PC-3 (cell line): ENCODE measurements at regions of chr4 and their contacts with region 1.

Region 1: GRCh38 chr4:26319467-26319948 is 1.3 kb upstream of the RBPJ start:
- DNase-seq: peak; percentile 98
- ATAC-seq: peak; percentile 71
- H3K4me3 ChIP-seq: peak overlapping the region; percentile 78
- H3K27ac ChIP-seq: peak overlapping the region; percentile 92
- H3K4me1 ChIP-seq: peaks cover 12% of the 10 kb centered on the region
- H3K27me3 ChIP-seq: no peaks in the 10 kb centered on the region
- CTCF ChIP-seq: no peak

Region 2: DNA sequence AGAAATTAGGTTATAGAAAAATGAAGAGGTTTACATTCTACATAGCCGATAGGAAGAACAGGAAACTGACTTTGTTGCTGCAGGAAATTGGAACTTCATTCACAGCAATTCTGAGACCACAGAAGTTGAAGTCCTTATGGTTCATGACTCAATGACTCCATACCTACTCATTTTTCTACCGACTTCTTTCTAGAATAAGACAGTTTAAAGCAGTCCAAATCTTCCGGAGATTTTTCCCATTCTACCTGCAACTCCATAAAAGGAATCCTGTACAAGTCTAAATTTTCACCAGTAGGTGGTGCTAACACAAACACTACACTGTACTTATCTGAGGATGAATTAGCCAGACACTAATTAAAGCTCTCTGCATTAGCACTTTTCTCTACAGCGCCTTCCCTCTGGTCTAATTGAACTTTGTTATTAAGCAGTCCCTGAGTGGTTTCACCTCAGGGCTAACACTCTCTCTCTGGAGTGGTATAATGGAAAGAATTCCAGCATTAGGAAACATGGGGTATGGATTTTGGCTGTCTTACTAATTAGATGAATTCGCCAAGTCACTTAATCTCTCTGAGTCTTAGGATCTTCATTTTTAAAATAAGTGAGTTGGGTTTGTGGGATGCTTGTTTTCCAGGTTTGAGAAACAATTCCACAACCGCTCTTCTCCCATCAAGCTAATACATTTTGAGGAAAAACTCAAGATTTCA is 237.6 kb before region 1 on chr4:
- CTCF ChIA-PET with region 1: no interaction called
- POLR2A ChIA-PET with region 1: no interaction called
- intact Hi-C with region 1: loop called (anchors 1 kb)
- DNase-seq: peak; percentile 71
- ATAC-seq: peak; percentile 9; the same call in 1 of the 2 replicates
- H3K4me3 ChIP-seq: no peak overlapping the region
- H3K27ac ChIP-seq: no peak overlapping the region
- H3K4me1 ChIP-seq: peaks cover 46% of the 10 kb centered on the region
- H3K27me3 ChIP-seq: no peaks in the 10 kb centered on the region
- CTCF ChIP-seq: peak; percentile 76

Region 3: DNA sequence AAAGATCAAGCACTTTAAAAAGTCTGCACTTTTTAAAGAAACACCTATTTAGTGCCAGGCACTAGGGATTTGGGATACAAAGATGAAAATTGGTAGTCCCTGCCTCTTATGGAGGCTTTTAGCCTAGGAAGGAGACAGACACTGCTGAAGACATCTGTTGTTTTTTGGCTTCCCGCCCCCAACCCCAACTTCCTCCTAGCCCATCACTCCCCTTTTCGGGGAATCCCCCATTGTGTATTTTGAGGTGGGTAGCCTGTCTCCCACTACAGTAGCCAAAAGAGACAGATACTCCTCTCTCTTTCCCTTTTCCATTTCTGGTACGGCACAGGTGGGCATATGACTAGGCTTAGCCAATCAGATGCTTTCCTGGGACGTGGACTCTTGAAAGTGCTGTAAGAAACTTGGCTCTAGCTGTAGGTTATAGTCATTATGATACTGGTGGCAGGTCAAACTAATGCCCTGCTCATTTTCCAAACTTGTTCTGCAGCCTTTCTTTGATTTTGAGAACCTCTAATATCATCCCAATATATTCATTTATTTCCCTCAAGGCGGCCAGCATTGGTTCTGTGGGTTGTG is 193.3 kb before region 1 on chr4:
- CTCF ChIA-PET with region 1: interaction called, 5 read pairs
- POLR2A ChIA-PET with region 1: interaction called, 7 read pairs
- intact Hi-C with region 1: loop called (anchors 1 kb)
- DNase-seq: no peak
- ATAC-seq: no peak
- H3K4me3 ChIP-seq: no peak overlapping the region
- H3K27ac ChIP-seq: no peak overlapping the region
- H3K4me1 ChIP-seq: peaks cover 35% of the 10 kb centered on the region
- H3K27me3 ChIP-seq: no peaks in the 10 kb centered on the region
- CTCF ChIP-seq: no peak

Region 4: GRCh38 chr4:26235500-26235899 is 84.0 kb before region 1 on chr4:
- CTCF ChIA-PET with region 1: interaction called, 15 read pairs
- POLR2A ChIA-PET with region 1: interaction called, 3 read pairs
- intact Hi-C with region 1: loop called (anchors 1 kb)
- DNase-seq: peak; percentile 72
- ATAC-seq: peak; percentile 29
- H3K4me3 ChIP-seq: no peak overlapping the region
- H3K27ac ChIP-seq: no peak overlapping the region
- H3K4me1 ChIP-seq: peaks cover 50% of the 10 kb centered on the region
- H3K27me3 ChIP-seq: no peaks in the 10 kb centered on the region
- CTCF ChIP-seq: 0 out of 2 replicates have a peak, but pooled peaks have one; percentile 22

Region 5: GRCh38 chr4:26613237-26613636 is 293.7 kb after region 1 on chr4:
- CTCF ChIA-PET with region 1: no interaction called
- POLR2A ChIA-PET with region 1: no interaction called
- intact Hi-C with region 1: no loop called
- DNase-seq: no peak
- ATAC-seq: no peak
- H3K4me3 ChIP-seq: no peak overlapping the region
- H3K27ac ChIP-seq: no peak overlapping the region
- H3K4me1 ChIP-seq: no peaks in the 10 kb centered on the region
- H3K27me3 ChIP-seq: no peaks in the 10 kb centered on the region
- CTCF ChIP-seq: no peak